Motor neuron (in vitro differentiated cells): ENCODE measurements at regions of chr17 and their contacts with region 1.

Region 1: DNA sequence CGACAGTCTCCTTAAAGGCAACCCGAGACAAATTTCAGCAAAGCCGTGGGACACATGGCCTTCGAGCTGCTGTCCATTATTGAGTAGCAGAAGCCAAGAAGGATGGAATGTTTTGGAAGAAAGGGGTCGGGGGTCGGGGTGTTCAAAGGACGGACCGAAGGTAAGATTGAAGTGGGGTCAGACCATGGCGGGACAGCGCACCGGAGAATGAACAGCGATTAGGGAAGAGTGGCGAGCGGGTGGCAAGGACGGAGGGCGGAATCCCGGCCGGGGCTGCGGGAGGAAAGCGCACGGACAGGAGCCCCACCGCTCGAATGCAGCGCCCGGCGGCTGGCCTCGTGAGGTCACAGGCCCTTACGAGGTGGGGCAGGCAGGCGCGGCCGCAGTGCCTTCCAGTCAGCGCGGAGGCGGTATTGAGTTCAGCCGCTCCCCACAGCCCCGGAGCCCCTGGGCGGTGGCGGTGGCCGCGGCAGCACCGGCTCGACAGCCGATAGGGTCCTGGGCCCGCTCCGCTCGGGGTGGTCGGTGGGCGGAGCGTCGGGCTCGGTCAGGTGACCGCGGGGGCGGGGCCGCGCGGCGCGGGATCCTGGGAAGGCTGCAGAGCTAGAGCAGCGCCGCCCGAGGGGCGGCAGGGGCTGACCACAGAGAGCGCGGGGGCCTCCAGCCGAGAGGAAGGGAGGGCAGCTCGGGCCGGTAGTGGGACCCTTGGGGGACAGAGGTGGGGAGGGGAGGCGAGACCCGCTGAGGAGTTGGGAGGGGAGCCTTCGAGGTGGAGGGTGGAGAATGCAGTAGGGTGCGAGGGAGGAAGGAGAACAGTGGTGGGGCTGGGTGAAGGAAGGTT is at the start of gene EFCAB13:
- ATAC-seq: peak; percentile 90 to 96 (median 95)
- H3K4me3 ChIP-seq: peak within 1 kb of the TSS; percentile 39 to 48 (median 41)
- H3K27ac ChIP-seq: peak within 1 kb of the TSS; percentile 39 to 53
- H3K4me1 ChIP-seq: no peaks in the 10 kb centered on the region
- total RNA-seq, gene EFCAB13: 1.3 to 6.9 (median 3.0) TPM

Region 2: DNA sequence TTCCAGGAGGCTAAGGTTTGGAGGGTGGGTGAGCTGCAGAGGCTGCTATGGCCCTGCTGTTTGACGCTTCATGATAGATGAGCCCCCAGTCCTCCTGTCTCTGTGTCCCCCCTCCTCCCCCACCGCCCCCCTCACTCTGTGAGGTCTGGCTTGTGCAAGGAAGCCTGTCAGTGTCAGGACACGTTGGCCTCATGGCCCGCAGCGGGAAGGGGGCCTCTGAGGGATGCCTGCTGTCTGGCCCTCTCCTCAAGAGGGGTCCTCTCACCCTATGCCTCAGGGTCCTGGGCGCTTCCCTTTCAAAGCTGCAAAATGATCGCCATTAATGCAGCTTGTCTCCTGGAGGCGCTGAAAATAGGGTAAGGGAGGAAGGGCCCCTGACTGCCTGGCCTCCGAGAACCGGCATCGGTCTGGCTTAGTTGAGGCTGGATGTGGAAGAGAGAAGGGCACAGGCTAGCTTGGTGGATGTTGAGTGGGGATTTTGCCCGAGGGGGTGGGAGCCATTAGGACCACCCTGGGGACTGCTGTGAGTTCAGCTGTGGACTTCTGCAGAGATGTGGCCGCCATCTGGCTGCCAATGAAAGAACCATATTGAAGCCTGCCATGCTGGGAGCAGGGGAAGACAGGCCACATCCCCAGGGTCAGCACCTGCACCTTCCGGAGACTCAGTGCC is 415.4 kb before region 1 on chr17:
- in situ Hi-C with region 1: no loop called
- ATAC-seq: peak in 5 of 8 experiments; percentile 22 to 56 (median 45)
- H3K4me3 ChIP-seq: no peak overlapping the region
- H3K27ac ChIP-seq: no peak overlapping the region
- H3K4me1 ChIP-seq: peaks cover 2 to 14% of the 10 kb centered on the region in 2 donors

Region 3: DNA sequence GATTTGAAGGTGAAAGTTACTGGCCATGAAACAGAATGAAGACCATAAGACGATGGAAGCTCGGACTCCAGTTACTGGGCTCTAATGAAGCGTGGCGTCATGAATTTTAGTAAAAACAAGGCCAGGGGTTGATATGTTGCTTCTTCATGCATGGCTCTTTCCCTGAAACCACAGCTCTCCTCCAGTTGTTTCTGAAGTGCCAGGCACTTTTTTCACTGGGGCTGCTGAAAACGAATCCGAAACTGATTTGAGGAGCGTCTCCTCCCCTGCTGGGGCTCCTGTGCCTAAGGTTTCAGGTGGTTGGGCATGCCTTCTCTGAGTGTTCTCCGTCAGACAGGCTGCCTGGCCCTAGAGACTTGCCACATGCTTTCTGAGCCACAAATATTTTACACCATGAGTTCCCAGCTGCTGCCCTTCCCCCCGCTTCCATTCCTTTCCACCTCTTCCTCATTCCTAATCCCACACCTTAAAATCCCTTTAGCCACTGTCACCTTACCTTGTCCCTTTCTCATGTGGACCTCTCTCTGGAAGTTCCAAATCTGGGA is 118.1 kb before region 1 on chr17:
- in situ Hi-C with region 1: loop called in 1 of 9 experiments (anchors 25 kb)
- ATAC-seq: peak in 3 of 8 experiments; percentile 30 to 81 (median 48)
- H3K4me3 ChIP-seq: no peak overlapping the region
- H3K27ac ChIP-seq: no peak overlapping the region
- H3K4me1 ChIP-seq: peaks cover 2 to 4% of the 10 kb centered on the region in 2 donors

Region 4: DNA sequence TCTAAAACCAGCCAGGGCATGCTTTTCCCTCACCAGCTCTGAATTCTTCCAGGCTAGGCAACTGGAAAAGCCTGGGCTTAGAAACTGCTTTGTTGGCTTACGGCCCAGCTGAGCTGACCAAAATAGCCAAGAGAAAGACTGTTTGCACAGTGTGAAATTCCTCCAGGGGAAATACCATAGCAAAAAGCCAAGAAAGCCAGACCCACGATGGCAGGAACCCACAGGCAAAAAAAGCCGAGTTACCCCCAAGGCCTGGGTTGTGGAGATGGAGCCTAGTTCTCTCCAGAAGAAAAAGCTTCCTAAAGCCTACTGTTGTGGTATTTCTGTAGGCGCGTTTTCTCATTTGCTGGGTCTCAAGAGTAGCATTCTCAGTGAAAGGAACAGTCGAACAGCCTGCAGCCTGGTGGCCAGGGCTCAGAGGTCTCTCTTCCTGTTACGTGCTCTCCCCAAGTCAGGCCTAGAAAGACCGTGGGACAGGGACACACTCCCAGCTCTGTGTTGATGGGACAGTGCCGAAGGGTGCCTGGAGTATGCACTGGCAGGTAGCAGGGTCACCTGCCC is 581.7 kb after region 1 on chr17:
- in situ Hi-C with region 1: no loop called
- ATAC-seq: peak in 6 of 8 experiments; percentile 47 to 90 (median 67)
- H3K4me3 ChIP-seq: no peak overlapping the region
- H3K27ac ChIP-seq: no peak overlapping the region
- H3K4me1 ChIP-seq: no peaks in the 10 kb centered on the region